CD8-positive, alpha-beta memory T cell (primary cell): ENCODE measurements at regions of chr9 and their contacts with region 1.

Region 1: GRCh38 chr9:22008736-22009562 is at the start of gene CDKN2B:
- DNase-seq: peak; percentile 32 to 74 (median 61)
- H3K4me3 ChIP-seq: peak within 1 kb of the TSS; percentile 62
- H3K4me3 Mint-ChIP-seq: peak within 1 kb of the TSS; percentile 78 to 93 (median 85)
- H3K27ac ChIP-seq: no peak within 1 kb of the TSS
- H3K27ac Mint-ChIP-seq: peak within 1 kb of the TSS in 5 of 8 donors; percentile 19 to 56 (median 45)
- H3K4me1 ChIP-seq: peaks cover 13% of the 10 kb centered on the region
- H3K4me1 Mint-ChIP-seq: peaks cover 24 to 28% (median 26%) of the 10 kb centered on the region in 3 donors
- H3K27me3 ChIP-seq: peaks cover 37% of the 10 kb centered on the region
- H3K27me3 Mint-ChIP-seq: peaks cover 40 to 57% of the 10 kb centered on the region in 2 donors
- total RNA-seq, gene CDKN2B: 0.09 TPM in 1 of 2 experiments, not detected in the other

Region 2: GRCh38 chr9:21812946-21813568 is 195.9 kb before region 1 on chr9:
- CTCF ChIA-PET with region 1: interaction called, 142 read pairs
- POLR2A ChIA-PET with region 1: no interaction called
- DNase-seq: peak; percentile 49 to 77 (median 59)
- H3K4me3 ChIP-seq: no peak overlapping the region
- H3K4me3 Mint-ChIP-seq: peak overlapping the region in 3 of 7 donors; percentile 40 to 57 (median 48)
- H3K27ac ChIP-seq: no peak overlapping the region
- H3K27ac Mint-ChIP-seq: peak overlapping the region in 5 of 8 donors; percentile 36 to 86 (median 40)
- H3K4me1 ChIP-seq: peaks cover 13% of the 10 kb centered on the region
- H3K4me1 Mint-ChIP-seq: peaks cover 14 to 19% (median 14%) of the 10 kb centered on the region in 3 donors
- H3K27me3 ChIP-seq: no peaks in the 10 kb centered on the region
- H3K27me3 Mint-ChIP-seq: no peaks in the 10 kb centered on the region

Region 3: GRCh38 chr9:21970800-21971640 is 37.9 kb before region 1 on chr9:
- CTCF ChIA-PET with region 1: interaction called, 12 read pairs
- POLR2A ChIA-PET with region 1: no interaction called
- DNase-seq: no peak
- H3K4me3 ChIP-seq: no peak overlapping the region
- H3K4me3 Mint-ChIP-seq: peak overlapping the region in 1 of 7 donors; percentile 59
- H3K27ac ChIP-seq: no peak overlapping the region
- H3K27ac Mint-ChIP-seq: peak overlapping the region in 1 of 8 donors; percentile 87
- H3K4me1 ChIP-seq: peaks cover 16% of the 10 kb centered on the region
- H3K4me1 Mint-ChIP-seq: peaks cover 31 to 41% (median 35%) of the 10 kb centered on the region in 3 donors
- H3K27me3 ChIP-seq: peaks cover 87% of the 10 kb centered on the region
- H3K27me3 Mint-ChIP-seq: peaks cover 89 to 96% of the 10 kb centered on the region in 2 donors

Region 4: DNA sequence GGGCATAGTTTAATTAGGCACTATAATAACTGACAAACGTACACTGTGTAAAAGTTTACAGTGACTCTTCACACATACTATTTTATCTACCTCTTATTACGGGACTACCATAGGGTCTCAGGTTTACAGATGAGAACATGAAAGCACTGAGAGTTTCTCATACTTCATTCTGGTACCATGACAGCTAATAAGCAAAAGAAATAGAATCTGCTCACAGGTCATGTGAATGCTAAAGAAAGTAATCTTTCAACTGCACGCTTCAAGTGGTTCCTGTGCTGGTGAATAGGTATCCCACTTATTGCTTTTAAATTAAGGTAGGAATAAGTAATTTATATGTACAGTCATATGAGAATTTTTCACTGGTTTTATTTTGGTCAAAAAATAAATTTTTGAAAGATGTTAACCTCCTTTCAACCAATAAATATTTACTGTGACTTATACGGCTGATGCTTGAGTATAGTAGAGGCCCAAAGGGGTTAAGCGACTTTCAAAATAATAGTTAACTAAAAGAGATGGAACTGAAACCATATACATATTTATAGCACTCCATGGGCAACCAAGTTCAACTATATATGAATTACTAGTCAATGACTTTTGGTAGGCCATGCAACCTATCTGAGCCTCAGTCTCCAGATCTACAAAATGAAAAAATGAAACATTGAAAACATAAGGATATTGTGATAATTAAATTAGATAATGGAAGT is 22.8 kb before region 1 on chr9:
- CTCF ChIA-PET with region 1: interaction called, 11 read pairs
- POLR2A ChIA-PET with region 1: no interaction called
- DNase-seq: no peak
- H3K4me3 ChIP-seq: no peak overlapping the region
- H3K4me3 Mint-ChIP-seq: no peak overlapping the region
- H3K27ac ChIP-seq: no peak overlapping the region
- H3K27ac Mint-ChIP-seq: no peak overlapping the region
- H3K4me1 ChIP-seq: no peaks in the 10 kb centered on the region
- H3K4me1 Mint-ChIP-seq: peaks cover under 1 to 7% (median 2%) of the 10 kb centered on the region in 3 donors
- H3K27me3 ChIP-seq: peaks cover 13% of the 10 kb centered on the region
- H3K27me3 Mint-ChIP-seq: peaks cover 19 to 63% of the 10 kb centered on the region in 2 donors

Region 5: DNA sequence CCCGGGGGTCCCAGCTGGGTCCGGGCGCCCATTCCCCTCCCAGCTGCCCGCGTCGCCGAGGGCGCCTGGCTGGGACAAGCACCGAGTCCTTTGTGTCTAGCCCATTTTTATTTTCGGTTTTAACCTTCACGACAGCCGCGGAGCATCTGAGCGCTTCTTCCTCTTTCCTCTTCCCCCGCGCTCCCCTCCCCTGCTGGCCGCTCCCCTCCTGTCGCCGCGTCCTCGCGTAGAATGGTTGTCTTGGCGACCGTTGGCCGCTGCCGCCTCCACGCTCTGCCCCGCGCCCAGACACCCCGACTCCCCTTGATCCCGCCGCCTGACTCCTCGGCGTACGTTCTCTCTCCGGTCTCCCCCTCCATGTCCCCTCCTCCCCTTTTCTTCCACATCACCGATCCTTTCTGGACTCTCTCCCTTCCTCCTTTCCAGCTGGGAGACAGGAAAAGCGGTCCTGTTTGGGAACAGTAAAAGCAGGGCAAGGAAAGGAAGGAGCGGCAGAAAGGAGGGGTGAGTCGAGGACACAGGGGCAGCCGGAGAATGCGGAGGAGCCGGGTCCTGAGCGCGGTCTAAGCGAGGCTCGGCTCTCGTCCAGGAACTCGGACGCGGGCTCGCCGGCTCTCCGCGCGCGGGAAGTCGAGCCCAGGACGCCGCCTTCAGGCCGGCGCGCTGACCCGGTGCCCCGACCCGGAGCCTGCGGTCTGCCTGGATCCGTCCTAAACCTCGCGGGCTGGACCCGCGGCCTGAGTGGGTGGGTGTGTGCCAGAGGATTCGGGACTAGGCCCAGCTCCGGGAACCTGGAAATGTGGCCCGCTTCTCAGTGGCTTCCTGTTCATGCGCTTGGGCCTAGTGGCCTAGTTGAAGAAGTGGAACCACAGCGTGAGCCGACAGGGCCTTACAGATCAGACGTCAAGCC is 13.5 kb before region 1 on chr9:
- CTCF ChIA-PET with region 1: interaction called, 17 read pairs
- POLR2A ChIA-PET with region 1: interaction called, 13 read pairs
- DNase-seq: peak; percentile 70 to 89 (median 73)
- H3K4me3 ChIP-seq: peak overlapping the region; percentile 87
- H3K4me3 Mint-ChIP-seq: peak overlapping the region; percentile 96 to 99 (median 98)
- H3K27ac ChIP-seq: peak overlapping the region; percentile 90
- H3K27ac Mint-ChIP-seq: peak overlapping the region; percentile 87 to 98 (median 96)
- H3K4me1 ChIP-seq: peaks cover 19% of the 10 kb centered on the region
- H3K4me1 Mint-ChIP-seq: peaks cover 16 to 26% (median 24%) of the 10 kb centered on the region in 3 donors
- H3K27me3 ChIP-seq: no peaks in the 10 kb centered on the region
- H3K27me3 Mint-ChIP-seq: peaks cover 3% of the 10 kb centered on the region in 2 donors

Region 6: GRCh38 chr9:22022396-22022795 is 13.4 kb after region 1 on chr9:
- CTCF ChIA-PET with region 1: interaction called, 16 read pairs
- POLR2A ChIA-PET with region 1: no interaction called
- DNase-seq: no peak
- H3K4me3 ChIP-seq: no peak overlapping the region
- H3K4me3 Mint-ChIP-seq: no peak overlapping the region
- H3K27ac ChIP-seq: no peak overlapping the region
- H3K27ac Mint-ChIP-seq: no peak overlapping the region
- H3K4me1 ChIP-seq: no peaks in the 10 kb centered on the region
- H3K4me1 Mint-ChIP-seq: no peaks in the 10 kb centered on the region
- H3K27me3 ChIP-seq: no peaks in the 10 kb centered on the region
- H3K27me3 Mint-ChIP-seq: peaks cover 15 to 32% of the 10 kb centered on the region in 2 donors

Region 7: GRCh38 chr9:22037954-22038690 is 29.2 kb after region 1 on chr9:
- CTCF ChIA-PET with region 1: interaction called, 16 read pairs
- POLR2A ChIA-PET with region 1: no interaction called
- DNase-seq: peak in 2 of 5 donors; percentile 16 to 23
- H3K4me3 ChIP-seq: no peak overlapping the region
- H3K4me3 Mint-ChIP-seq: no peak overlapping the region
- H3K27ac ChIP-seq: no peak overlapping the region
- H3K27ac Mint-ChIP-seq: no peak overlapping the region
- H3K4me1 ChIP-seq: no peaks in the 10 kb centered on the region
- H3K4me1 Mint-ChIP-seq: peaks cover 0 to 17% (median 14%) of the 10 kb centered on the region in 3 donors
- H3K27me3 ChIP-seq: no peaks in the 10 kb centered on the region
- H3K27me3 Mint-ChIP-seq: no peaks in the 10 kb centered on the region

Region 8: DNA sequence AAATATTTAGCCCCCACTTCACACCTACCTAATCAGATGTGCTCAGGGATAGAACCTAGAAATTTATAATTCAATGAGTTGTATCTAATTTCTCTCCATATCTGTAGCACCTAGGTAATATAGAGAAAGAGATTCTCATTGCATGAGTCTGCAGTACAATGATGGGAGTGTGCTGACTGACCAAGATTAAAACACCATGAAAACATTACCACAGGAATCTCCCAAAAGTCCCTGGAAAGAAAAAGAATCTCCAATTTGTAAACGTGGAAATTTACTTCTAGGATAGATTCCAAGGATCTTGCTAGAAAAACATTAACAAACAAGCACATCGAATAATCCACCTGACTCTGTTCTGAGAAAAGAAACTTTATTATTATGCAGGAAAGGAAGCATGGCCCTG is 392.7 kb after region 1 on chr9:
- CTCF ChIA-PET with region 1: no interaction called
- POLR2A ChIA-PET with region 1: no interaction called
- DNase-seq: no peak
- H3K4me3 ChIP-seq: no peak overlapping the region
- H3K4me3 Mint-ChIP-seq: no peak overlapping the region
- H3K27ac ChIP-seq: no peak overlapping the region
- H3K27ac Mint-ChIP-seq: no peak overlapping the region
- H3K4me1 ChIP-seq: no peaks in the 10 kb centered on the region
- H3K4me1 Mint-ChIP-seq: no peaks in the 10 kb centered on the region
- H3K27me3 ChIP-seq: no peaks in the 10 kb centered on the region
- H3K27me3 Mint-ChIP-seq: peaks cover 1 to 5% of the 10 kb centered on the region in 2 donors